Breast epithelium (tissue), 4 donors: ENCODE measurements at regions of chr14 and their contacts with region 1.

Region 1: GRCh38 chr14:87046960-87047359 is 946.0 kb downstream of the GALC start:
- DNase-seq: no peak
- H3K4me3 ChIP-seq: no peak overlapping the region
- H3K27ac ChIP-seq: no peak overlapping the region
- H3K4me1 ChIP-seq: no peaks in the 10 kb centered on the region
- H3K27me3 ChIP-seq: no peaks in the 10 kb centered on the region
- CTCF ChIP-seq: no peak
- POLR2A ChIP-seq: no peak

Region 2: GRCh38 chr14:87081004-87081403 is 34.0 kb after region 1 on chr14:
- intact Hi-C with region 1: loop called (anchors 2 kb)
- DNase-seq: no peak
- H3K4me3 ChIP-seq: no peak overlapping the region
- H3K27ac ChIP-seq: no peak overlapping the region
- H3K4me1 ChIP-seq: no peaks in the 10 kb centered on the region
- H3K27me3 ChIP-seq: no peaks in the 10 kb centered on the region
- CTCF ChIP-seq: no peak
- POLR2A ChIP-seq: no peak